PC-9 (cell line): ENCODE measurements at regions of chr7 and their contacts with region 1.

Region 1: GRCh38 chr7:134432296-134433152 is 26.4 kb downstream of the AKR1B1 start:
- DNase-seq: peak; percentile 88 to 91
- H3K4me3 ChIP-seq: peak overlapping the region; percentile 51
- H3K27ac ChIP-seq: peak overlapping the region; percentile 80
- H3K4me1 ChIP-seq: peaks cover 48% of the 10 kb centered on the region
- H3K27me3 ChIP-seq: no peaks in the 10 kb centered on the region
- CTCF ChIP-seq: peak; percentile 96

Region 2: DNA sequence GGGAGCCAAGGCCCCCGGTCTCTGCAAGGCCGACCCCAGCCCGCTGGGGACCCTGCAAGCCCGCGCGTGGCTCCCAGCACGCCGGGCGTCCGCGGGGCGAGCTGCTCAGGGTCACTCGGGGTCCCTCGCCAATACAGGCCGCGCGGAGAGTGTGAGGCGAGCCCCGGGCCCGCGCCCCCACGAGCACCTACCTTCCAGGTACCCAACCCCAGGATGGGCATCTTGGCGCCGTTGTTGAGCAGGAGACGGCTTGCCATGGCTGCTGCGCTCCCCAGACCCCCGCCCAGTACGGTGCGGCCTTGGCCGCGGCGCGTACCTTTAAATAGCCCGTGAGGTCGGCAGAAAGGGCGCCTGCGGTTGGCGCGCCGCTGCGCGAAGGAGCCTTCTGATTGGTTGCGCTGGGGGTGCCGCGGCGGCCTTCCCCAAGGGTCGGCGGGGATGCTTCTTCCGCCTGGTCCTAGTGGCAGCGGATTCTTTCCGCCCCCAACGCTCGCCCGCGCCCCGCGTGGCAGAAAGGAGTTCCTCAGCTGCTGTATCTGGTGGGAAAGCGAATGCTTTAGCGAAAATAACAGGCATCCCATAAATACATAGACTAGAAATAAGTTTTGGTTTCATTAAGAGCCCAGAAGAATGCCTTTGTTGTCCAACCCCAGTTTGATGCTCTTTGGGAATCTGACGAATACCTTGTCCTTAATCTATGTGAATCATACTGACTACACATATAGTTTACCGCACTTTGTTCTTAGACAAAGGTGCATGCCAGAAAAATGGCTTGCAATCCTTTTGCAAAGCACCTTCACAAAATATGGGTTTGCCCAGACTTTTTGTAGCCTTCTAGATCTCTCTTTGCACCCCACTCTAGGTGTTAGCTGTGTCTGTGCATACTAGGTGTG is 26.5 kb after region 1 on chr7 and contains the start of gene AKR1B1:
- CTCF ChIA-PET with region 1: interaction called, 6 read pairs
- POLR2A ChIA-PET with region 1: interaction called, 7 read pairs
- intact Hi-C with region 1: loop called (anchors 1 kb)
- DNase-seq: peak; percentile 88 to 95
- H3K4me3 ChIP-seq: peak within 1 kb of the TSS; percentile 93
- H3K27ac ChIP-seq: peak within 1 kb of the TSS; percentile 97
- H3K4me1 ChIP-seq: peaks cover 74% of the 10 kb centered on the region
- H3K27me3 ChIP-seq: no peaks in the 10 kb centered on the region
- CTCF ChIP-seq: peak; percentile 36; the same call in 1 of the 2 replicates
- total RNA-seq, gene AKR1B1: 1,009 and 1,328 TPM in 2 replicates

Region 3: DNA sequence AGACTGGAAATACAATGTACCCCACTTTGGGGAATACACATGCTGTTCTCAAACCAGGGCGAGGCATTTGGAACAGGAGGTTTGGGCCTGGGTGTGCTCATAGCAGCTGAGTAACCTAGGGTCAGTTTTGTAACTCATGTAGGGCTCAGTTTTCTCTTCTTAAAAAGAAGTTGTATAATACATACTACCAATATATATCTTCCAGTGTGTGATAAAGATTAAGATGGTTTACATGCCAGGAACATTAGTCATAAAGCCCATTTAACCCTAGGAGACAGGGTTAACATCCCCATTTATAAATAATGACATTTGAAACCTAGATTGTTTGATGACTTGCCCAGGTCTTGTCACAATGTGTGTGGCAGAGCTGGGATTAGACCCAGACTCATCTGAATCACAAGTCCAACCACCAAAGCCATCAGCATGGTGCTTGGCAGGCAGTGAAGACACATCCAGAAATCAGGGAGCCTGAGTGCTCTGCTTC is 100.8 kb after region 1 on chr7:
- CTCF ChIA-PET with region 1: interaction called, 5 read pairs
- POLR2A ChIA-PET with region 1: interaction called, 4 read pairs
- intact Hi-C with region 1: loop called (anchors 1 kb)
- DNase-seq: peak; percentile 44 to 95
- H3K4me3 ChIP-seq: peak overlapping the region; percentile 87
- H3K27ac ChIP-seq: peak overlapping the region; percentile 96
- H3K4me1 ChIP-seq: peaks cover 56% of the 10 kb centered on the region
- H3K27me3 ChIP-seq: no peaks in the 10 kb centered on the region
- CTCF ChIP-seq: no peak

Region 4: GRCh38 chr7:134605973-134606923 is 173.7 kb after region 1 on chr7:
- CTCF ChIA-PET with region 1: interaction called, 14 read pairs
- POLR2A ChIA-PET with region 1: no interaction called
- intact Hi-C with region 1: loop called (anchors 1 kb)
- DNase-seq: peak; percentile 70 to 92
- H3K4me3 ChIP-seq: no peak overlapping the region
- H3K27ac ChIP-seq: peak overlapping the region; percentile 80
- H3K4me1 ChIP-seq: peaks cover 32% of the 10 kb centered on the region
- H3K27me3 ChIP-seq: no peaks in the 10 kb centered on the region
- CTCF ChIP-seq: peak; percentile 99

Region 5: GRCh38 chr7:135170274-135170997 is 737.9 kb after region 1 on chr7 and contains the start of gene CYREN:
- CTCF ChIA-PET with region 1: no interaction called
- POLR2A ChIA-PET with region 1: no interaction called
- intact Hi-C with region 1: loop called (anchors 5 kb)
- DNase-seq: peak; percentile 88 to 95
- H3K4me3 ChIP-seq: peak within 1 kb of the TSS; percentile 88
- H3K27ac ChIP-seq: peak within 1 kb of the TSS; percentile 81
- H3K4me1 ChIP-seq: peaks cover 19% of the 10 kb centered on the region
- H3K27me3 ChIP-seq: no peaks in the 10 kb centered on the region
- CTCF ChIP-seq: peak; percentile 73
- total RNA-seq, gene CYREN: 70.5 and 76.0 TPM in 2 replicates